Activated CD8-positive, alpha-beta T cell treated with anti-CD3 and anti-CD28 coated beads for 36 hours (primary cell): ENCODE measurements at regions of chr10 and their contacts with region 1.

Region 1: GRCh38 chr10:95841661-95842498 is 65.9 kb upstream of the CC2D2B start:
- DNase-seq: peak; percentile 66
- ATAC-seq: peak; percentile 69
- H3K4me3 Mint-ChIP-seq: no peak overlapping the region
- H3K27ac Mint-ChIP-seq: peak overlapping the region; percentile 17
- H3K4me1 Mint-ChIP-seq: peaks cover 15% of the 10 kb centered on the region
- H3K27me3 Mint-ChIP-seq: peaks cover 3% of the 10 kb centered on the region
- CTCF ChIP-seq: peak; percentile 77

Region 2: GRCh38 chr10:94591461-94592205 is 1250.2 kb before region 1 on chr10:
- CTCF ChIA-PET with region 1: no interaction called
- POLR2A ChIA-PET with region 1: no interaction called
- intact Hi-C with region 1: no loop called
- DNase-seq: no peak
- ATAC-seq: peak; percentile 47
- H3K4me3 Mint-ChIP-seq: no peak overlapping the region
- H3K27ac Mint-ChIP-seq: peak overlapping the region; percentile 57
- H3K4me1 Mint-ChIP-seq: peaks cover 13% of the 10 kb centered on the region
- H3K27me3 Mint-ChIP-seq: no peaks in the 10 kb centered on the region
- CTCF ChIP-seq: no peak

Region 3: GRCh38 chr10:95447685-95448084 is 394.2 kb before region 1 on chr10:
- CTCF ChIA-PET with region 1: no interaction called
- POLR2A ChIA-PET with region 1: no interaction called
- intact Hi-C with region 1: no loop called
- DNase-seq: no peak
- ATAC-seq: no peak
- H3K4me3 Mint-ChIP-seq: no peak overlapping the region
- H3K27ac Mint-ChIP-seq: no peak overlapping the region
- H3K4me1 Mint-ChIP-seq: no peaks in the 10 kb centered on the region
- H3K27me3 Mint-ChIP-seq: peaks cover 5% of the 10 kb centered on the region
- CTCF ChIP-seq: no peak

Region 4: DNA sequence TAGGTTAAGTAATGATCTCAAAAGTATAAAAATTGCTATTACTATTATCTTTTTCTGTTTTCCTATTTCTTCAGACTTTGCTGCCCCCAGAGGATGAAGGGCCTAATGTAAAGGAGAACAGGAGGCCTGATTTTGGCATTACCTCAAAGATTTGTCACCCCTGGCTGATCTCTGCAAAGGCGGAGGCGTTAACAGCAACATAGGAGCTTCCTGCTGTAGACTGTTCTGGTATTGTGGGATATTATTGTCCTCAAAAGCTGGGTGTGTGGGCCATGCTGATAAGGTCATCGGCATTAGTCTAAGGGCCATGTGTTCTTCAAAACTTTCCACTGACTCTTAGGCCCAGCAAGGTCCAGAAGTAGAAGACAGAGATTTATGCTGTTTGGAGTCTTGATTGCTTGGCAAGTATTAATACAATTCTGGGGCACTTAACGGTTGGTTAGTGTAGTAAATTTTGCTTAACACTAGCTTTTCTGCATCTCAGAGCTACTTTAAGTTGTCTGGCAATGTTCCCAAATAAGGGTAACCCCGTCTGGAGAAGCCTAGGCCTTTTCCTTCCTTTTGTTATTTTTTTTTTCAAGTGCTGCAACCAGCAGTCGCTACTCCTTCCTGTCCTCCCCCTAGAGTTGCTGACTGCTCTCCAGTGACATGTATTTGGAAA is 99.9 kb before region 1 on chr10:
- CTCF ChIA-PET with region 1: interaction called, 18 read pairs
- POLR2A ChIA-PET with region 1: no interaction called
- intact Hi-C with region 1: no loop called
- DNase-seq: peak; percentile 6
- ATAC-seq: peak; percentile 24
- H3K4me3 Mint-ChIP-seq: no peak overlapping the region
- H3K27ac Mint-ChIP-seq: no peak overlapping the region
- H3K4me1 Mint-ChIP-seq: no peaks in the 10 kb centered on the region
- H3K27me3 Mint-ChIP-seq: peaks cover 8% of the 10 kb centered on the region
- CTCF ChIP-seq: no peak

Region 5: DNA sequence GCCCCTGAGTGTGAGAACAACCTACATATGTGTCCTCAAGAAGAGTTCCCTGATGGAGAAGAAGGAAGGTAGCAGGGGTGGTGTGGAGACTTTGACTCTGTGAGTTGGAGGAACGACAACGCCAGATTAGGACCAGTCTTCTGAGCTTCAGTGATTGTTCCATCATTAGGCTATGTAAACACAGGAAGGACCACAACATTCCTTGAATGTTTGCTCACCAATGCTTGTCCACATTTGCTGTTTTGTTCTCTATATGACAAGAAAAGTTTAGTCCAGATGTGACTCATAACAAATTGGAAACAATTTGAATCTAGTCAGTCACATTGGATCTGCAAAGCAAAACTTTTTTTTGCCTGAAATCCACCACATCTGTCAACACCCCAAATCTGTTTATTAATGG is 23.2 kb before region 1 on chr10:
- CTCF ChIA-PET with region 1: interaction called, 10 read pairs
- POLR2A ChIA-PET with region 1: no interaction called
- intact Hi-C with region 1: no loop called
- DNase-seq: no peak
- ATAC-seq: no peak
- H3K4me3 Mint-ChIP-seq: no peak overlapping the region
- H3K27ac Mint-ChIP-seq: no peak overlapping the region
- H3K4me1 Mint-ChIP-seq: peaks cover 3% of the 10 kb centered on the region
- H3K27me3 Mint-ChIP-seq: peaks cover 13% of the 10 kb centered on the region
- CTCF ChIP-seq: no peak

Region 6: GRCh38 chr10:95864906-95865813 is 23.3 kb after region 1 on chr10:
- CTCF ChIA-PET with region 1: interaction called, 62 read pairs
- POLR2A ChIA-PET with region 1: interaction called, 3 read pairs
- intact Hi-C with region 1: no loop called
- DNase-seq: peak; percentile 56
- ATAC-seq: peak; percentile 98
- H3K4me3 Mint-ChIP-seq: no peak overlapping the region
- H3K27ac Mint-ChIP-seq: peak overlapping the region; percentile 45
- H3K4me1 Mint-ChIP-seq: peaks cover 11% of the 10 kb centered on the region
- H3K27me3 Mint-ChIP-seq: no peaks in the 10 kb centered on the region
- CTCF ChIP-seq: peak; percentile 58